AG04449 (cell line): ENCODE measurements at regions of chr20 and their contacts with region 1.

Region 1: GRCh38 chr20:2402271-2402980 is 21.7 kb downstream of the TGM6 start:
- DNase-seq: peak; percentile 34
- H3K4me3 ChIP-seq: no peak overlapping the region
- CTCF ChIP-seq: peak; percentile 40

Region 2: GRCh38 chr20:1953621-1954020 is 448.8 kb before region 1 on chr20:
- CTCF ChIA-PET with region 1: no interaction called
- POLR2A ChIA-PET with region 1: no interaction called
- DNase-seq: no peak
- H3K4me3 ChIP-seq: no peak overlapping the region
- CTCF ChIP-seq: no peak

Region 3: DNA sequence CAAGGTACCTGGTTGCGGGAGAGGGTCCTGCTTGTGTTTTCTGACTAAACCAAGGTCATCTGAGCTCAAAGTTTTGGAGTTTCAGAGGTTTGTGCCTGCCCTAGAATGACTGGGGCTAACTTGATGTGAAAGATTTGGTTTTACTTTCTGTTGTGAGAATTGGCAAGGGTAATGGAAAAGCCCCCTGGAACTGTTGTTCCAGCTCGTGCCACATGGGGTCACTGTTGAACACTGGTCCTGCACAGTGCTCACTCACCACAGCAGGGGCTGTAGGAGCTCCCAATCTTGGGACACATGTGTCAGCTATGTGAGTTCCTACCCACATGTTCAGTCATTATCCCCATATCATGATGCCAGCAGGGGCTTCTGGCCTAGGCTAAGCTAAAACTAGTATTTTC is 15.2 kb before region 1 on chr20:
- CTCF ChIA-PET with region 1: interaction called, 57 read pairs
- POLR2A ChIA-PET with region 1: no interaction called
- DNase-seq: no peak
- H3K4me3 ChIP-seq: no peak overlapping the region
- CTCF ChIP-seq: peak; percentile 41

Region 4: GRCh38 chr20:2421247-2421646 is 18.8 kb after region 1 on chr20:
- CTCF ChIA-PET with region 1: no interaction called
- POLR2A ChIA-PET with region 1: no interaction called
- DNase-seq: no peak
- H3K4me3 ChIP-seq: no peak overlapping the region
- CTCF ChIP-seq: no peak

Region 5: DNA sequence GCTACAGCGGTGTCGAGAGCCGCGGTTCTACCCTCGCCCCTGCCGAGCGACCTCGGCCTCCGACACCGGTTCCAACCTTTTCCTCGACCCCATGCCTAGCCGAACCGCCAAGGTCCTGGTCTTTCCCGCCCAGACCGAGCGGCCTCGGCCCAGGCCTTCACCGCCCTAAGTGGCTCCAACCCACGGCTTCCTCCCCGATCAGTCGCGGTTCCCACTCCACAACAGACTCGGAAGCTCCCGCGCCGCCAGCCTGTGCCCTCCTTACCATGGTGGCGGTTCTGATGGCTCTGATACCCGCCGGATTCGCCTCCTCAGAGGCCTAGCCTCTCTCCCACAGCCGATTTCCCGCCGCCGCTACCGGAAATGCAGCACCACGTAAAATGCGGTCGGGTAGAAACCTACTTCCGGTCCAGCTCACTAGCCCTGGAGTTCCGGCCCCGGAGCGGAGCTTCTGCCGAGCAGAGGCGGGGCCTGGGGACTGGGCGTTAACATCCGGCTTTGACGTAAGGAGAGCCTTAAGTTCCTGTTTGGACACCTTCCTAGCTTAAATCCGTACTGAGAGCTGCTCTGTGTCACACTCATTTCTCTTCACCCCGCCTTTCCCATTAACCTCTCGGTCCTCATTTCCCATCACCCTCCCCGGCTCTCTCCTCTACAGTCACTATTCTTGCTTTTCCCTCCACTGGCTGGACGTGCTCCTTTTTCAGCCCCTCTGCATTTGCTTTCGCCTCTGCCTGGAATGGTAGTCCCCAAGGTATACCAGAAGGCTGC is 68.2 kb after region 1 on chr20 and contains the start of gene SNRPB:
- CTCF ChIA-PET with region 1: no interaction called
- POLR2A ChIA-PET with region 1: no interaction called
- DNase-seq: peak; percentile 97
- H3K4me3 ChIP-seq: peak within 1 kb of the TSS; percentile 97
- CTCF ChIP-seq: no peak

Region 6: DNA sequence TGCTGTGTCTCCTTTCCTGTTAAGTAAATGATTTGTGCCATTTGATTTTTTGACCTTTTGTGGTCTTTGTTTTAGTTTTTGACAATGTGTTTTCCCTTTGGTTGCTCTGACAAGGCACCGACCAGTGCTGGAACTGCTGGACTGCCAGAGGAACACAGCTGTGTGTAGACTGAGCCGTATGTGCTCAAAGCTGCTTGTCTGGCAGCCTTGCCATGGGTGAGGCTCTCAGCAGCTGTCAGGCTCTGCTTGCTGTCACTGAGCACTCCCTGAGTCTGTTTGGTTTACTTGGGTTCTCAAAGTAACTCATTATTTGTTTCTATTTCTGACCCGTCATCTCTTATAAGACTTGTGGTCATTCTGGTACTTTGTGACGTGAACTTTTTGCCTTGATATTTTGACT is 83.2 kb after region 1 on chr20:
- CTCF ChIA-PET with region 1: no interaction called
- POLR2A ChIA-PET with region 1: no interaction called
- DNase-seq: no peak
- H3K4me3 ChIP-seq: no peak overlapping the region
- CTCF ChIP-seq: no peak